ENCODE measurements at regions of chr11 and their contacts with region 1.

Region 1: GRCh38 chr11:55942785-55943392 is 6.7 kb upstream of the OR5I1 start:
- DNase-seq: no peak
- ATAC-seq: peak; percentile 39

Region 2: DNA sequence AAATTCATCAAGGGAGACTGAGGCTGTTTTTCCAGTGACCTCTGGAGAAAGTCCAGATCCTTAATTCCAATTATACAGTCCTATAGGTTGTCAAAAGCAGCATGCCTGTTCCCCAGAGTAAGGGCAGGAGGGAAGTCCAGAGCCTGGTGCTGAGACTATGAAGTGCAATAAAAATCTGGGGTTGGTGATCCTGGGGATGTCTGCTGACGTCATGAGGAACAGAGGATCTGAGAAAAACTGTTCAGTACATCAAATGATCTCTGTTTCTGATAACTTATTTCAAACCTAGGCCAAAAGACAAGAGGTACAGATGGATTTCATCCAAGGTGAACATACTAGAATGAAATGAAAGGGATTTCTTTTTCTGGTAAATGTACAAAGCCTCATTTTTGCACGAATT is 40.6 kb before region 1 on chr11:
- intact Hi-C with region 1: no loop called
- DNase-seq: no peak
- ATAC-seq: no peak

Region 3: GRCh38 chr11:56010716-56011115 is 67.8 kb after region 1 on chr11:
- intact Hi-C with region 1: no loop called
- DNase-seq: no peak
- ATAC-seq: no peak

Region 4: GRCh38 chr11:56783448-56784041 is 840.7 kb after region 1 on chr11:
- intact Hi-C with region 1: loop called (anchors 10 kb)
- DNase-seq: no peak
- ATAC-seq: no peak

Region 5: DNA sequence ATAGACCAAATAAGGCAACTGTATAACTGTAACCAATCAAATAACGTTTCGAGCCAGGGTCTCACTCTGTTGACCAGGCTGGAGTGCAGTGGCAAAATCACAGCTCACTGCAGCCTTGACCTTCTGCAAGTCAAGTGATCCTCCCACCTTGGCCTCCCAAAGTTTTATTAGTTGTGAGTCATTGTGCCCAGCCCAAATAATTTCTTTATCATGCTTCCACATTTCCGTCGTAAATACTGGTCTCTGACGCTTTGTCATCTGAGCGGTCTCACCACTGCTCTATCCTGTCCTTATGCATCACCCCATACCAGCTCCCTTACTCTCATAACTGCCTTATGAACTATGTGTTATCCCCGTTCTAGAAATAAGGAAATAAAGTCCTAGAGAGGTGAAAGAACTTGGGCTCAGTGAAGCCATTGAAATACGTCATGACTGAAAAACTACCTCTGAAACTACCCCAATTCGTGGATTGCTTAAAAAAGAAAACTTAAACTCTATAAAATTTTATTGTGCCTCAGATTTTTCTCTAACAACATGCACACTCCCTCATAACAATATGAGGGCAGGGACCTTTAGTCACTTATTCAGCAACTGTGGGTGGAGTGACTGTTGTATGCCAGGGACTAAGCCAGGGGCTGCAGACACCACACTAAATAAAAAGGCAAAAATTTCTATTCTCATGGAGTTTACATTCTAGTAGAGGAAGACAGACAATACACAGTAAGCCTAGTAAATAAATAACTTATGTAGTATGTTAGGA is 1501.7 kb after region 1 on chr11:
- intact Hi-C with region 1: no loop called
- DNase-seq: no peak
- ATAC-seq: no peak

Measured in sciatic nerve (tissue), 2 donors.